Activated CD4-positive, alpha-beta memory T cell treated with anti-CD3 and anti-CD28 coated beads for 36 hours (primary cell): ENCODE measurements at regions of chr11 and their contacts with region 1.

Region 1: GRCh38 chr11:114262681-114263512 is 33.3 kb upstream of the NNMT start:
- DNase-seq: peak; percentile 20
- H3K4me3 Mint-ChIP-seq: no peak overlapping the region
- H3K27ac Mint-ChIP-seq: no peak overlapping the region
- H3K4me1 Mint-ChIP-seq: no peaks in the 10 kb centered on the region
- H3K27me3 Mint-ChIP-seq: no peaks in the 10 kb centered on the region

Region 2: DNA sequence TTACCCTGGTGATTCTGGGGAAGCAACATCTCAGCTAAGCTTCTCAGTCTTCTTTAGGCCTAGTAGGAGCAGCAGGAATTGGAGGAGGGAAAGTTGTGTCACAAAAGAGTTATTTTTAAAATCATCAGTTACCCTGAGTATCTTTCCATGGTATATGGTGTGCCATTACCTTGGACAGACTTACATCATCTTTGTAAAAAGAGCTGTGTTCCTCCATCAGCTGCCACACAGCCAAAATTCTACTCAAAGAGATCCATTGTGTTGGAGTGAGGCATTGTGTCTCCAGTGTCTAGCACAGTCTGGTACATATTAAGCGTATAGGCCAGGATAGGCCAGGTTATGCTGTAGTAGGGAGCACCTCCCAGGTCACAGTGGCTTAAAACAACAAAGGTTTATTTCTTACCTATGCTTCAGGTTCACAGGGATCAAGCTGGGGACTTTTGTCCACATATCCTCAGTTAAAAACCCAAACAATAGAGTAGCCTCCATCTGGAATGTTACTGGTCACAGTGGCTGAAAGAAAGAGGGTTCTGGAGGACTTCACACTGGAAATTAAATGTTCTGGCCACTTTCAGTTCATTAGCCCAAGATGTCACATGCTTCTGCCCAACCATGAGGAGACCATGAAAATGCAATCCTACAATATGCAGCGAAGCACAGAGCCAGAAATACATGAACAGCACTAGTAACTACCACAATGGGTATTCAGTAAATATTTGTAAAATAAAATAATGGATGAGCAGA is 546.8 kb before region 1 on chr11:
- CTCF ChIA-PET with region 1: no interaction called
- POLR2A ChIA-PET with region 1: no interaction called
- intact Hi-C with region 1: no loop called
- DNase-seq: no peak
- H3K4me3 Mint-ChIP-seq: no peak overlapping the region
- H3K27ac Mint-ChIP-seq: no peak overlapping the region
- H3K4me1 Mint-ChIP-seq: no peaks in the 10 kb centered on the region
- H3K27me3 Mint-ChIP-seq: no peaks in the 10 kb centered on the region

Region 3: DNA sequence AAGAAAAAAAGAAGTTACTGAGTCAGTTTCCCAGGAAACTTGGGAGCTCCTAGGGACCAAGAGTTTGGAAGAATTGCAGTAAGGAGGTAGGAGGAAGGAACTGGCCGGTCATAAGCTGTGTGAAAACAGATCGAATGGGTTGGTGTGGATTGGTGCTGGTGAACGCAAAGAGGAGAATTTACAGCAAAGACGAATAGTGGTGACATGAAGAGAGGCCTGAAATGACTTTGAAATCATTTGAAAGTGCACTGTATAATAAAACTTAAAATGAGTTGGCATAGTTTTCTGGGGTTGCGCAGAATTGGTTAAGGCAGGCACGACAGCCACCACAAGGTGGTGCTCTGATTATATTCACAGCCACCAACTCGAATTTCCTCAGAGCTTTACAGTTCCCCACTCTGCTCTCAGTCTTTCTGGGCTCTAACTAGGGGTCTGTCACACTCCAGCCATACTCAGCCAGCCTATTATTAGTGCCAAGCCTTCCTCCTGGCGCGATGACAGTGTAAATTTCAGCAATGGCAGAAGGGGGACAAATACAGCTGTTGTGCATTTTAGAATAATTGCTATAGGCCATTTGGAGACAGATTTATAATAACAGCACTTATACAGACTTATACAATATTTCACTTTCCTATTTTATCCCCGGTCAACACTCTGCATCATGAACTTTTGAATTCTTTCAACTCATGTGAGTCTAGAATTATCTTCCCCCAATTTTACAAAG is 366.6 kb before region 1 on chr11:
- CTCF ChIA-PET with region 1: interaction called, 140 read pairs
- POLR2A ChIA-PET with region 1: interaction called, 4 read pairs
- intact Hi-C with region 1: loop called (anchors 1 kb)
- DNase-seq: peak; percentile 50
- H3K4me3 Mint-ChIP-seq: no peak overlapping the region
- H3K27ac Mint-ChIP-seq: no peak overlapping the region
- H3K4me1 Mint-ChIP-seq: no peaks in the 10 kb centered on the region
- H3K27me3 Mint-ChIP-seq: no peaks in the 10 kb centered on the region

Region 4: GRCh38 chr11:114026355-114026754 is 236.5 kb before region 1 on chr11:
- CTCF ChIA-PET with region 1: interaction called, 24 read pairs
- POLR2A ChIA-PET with region 1: no interaction called
- intact Hi-C with region 1: no loop called
- DNase-seq: peak; percentile 31
- H3K4me3 Mint-ChIP-seq: no peak overlapping the region
- H3K27ac Mint-ChIP-seq: no peak overlapping the region
- H3K4me1 Mint-ChIP-seq: no peaks in the 10 kb centered on the region
- H3K27me3 Mint-ChIP-seq: no peaks in the 10 kb centered on the region

Region 5: GRCh38 chr11:114044042-114044871 is 218.6 kb before region 1 on chr11:
- CTCF ChIA-PET with region 1: interaction called, 34 read pairs
- POLR2A ChIA-PET with region 1: no interaction called
- intact Hi-C with region 1: no loop called
- DNase-seq: no peak
- H3K4me3 Mint-ChIP-seq: no peak overlapping the region
- H3K27ac Mint-ChIP-seq: no peak overlapping the region
- H3K4me1 Mint-ChIP-seq: peaks cover 12% of the 10 kb centered on the region
- H3K27me3 Mint-ChIP-seq: no peaks in the 10 kb centered on the region

Region 6: GRCh38 chr11:114059278-114059983 is 203.5 kb before region 1 on chr11 and contains the start of gene ZBTB16:
- CTCF ChIA-PET with region 1: interaction called, 19 read pairs
- POLR2A ChIA-PET with region 1: no interaction called
- intact Hi-C with region 1: loop called (anchors 5 kb)
- DNase-seq: peak; percentile 75
- H3K4me3 Mint-ChIP-seq: peak within 1 kb of the TSS; percentile 80
- H3K27ac Mint-ChIP-seq: peak within 1 kb of the TSS; percentile 67
- H3K4me1 Mint-ChIP-seq: peaks cover 6% of the 10 kb centered on the region
- H3K27me3 Mint-ChIP-seq: peaks cover 16% of the 10 kb centered on the region
- total RNA-seq, gene ZBTB16: 7.7 to 9.7 TPM

Region 7: DNA sequence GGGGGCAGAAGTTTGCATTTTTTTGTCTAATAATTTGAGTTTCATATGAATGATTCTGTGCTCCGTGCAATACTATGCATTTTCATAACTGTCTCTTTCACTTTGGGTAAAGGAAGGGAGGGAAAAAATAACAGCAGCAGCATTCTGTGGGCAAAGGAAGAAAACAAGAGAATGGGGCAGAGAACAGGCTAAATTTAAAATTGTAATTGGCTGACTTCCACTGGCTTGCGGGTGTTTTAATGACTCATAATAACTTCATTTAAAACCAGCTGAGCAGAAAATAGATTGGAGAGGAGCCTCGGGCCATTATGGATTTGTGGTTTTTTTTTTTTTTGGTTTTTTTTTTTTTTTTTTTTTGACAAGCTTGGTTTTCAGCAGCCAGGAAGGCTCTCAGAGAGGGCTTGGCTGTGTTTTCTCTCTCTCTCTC is 96.0 kb before region 1 on chr11:
- CTCF ChIA-PET with region 1: interaction called, 10 read pairs
- POLR2A ChIA-PET with region 1: no interaction called
- intact Hi-C with region 1: no loop called
- DNase-seq: no peak
- H3K4me3 Mint-ChIP-seq: peak overlapping the region; percentile 49
- H3K27ac Mint-ChIP-seq: peak overlapping the region; percentile 58
- H3K4me1 Mint-ChIP-seq: peaks cover 77% of the 10 kb centered on the region
- H3K27me3 Mint-ChIP-seq: peaks cover 2% of the 10 kb centered on the region

Region 8: DNA sequence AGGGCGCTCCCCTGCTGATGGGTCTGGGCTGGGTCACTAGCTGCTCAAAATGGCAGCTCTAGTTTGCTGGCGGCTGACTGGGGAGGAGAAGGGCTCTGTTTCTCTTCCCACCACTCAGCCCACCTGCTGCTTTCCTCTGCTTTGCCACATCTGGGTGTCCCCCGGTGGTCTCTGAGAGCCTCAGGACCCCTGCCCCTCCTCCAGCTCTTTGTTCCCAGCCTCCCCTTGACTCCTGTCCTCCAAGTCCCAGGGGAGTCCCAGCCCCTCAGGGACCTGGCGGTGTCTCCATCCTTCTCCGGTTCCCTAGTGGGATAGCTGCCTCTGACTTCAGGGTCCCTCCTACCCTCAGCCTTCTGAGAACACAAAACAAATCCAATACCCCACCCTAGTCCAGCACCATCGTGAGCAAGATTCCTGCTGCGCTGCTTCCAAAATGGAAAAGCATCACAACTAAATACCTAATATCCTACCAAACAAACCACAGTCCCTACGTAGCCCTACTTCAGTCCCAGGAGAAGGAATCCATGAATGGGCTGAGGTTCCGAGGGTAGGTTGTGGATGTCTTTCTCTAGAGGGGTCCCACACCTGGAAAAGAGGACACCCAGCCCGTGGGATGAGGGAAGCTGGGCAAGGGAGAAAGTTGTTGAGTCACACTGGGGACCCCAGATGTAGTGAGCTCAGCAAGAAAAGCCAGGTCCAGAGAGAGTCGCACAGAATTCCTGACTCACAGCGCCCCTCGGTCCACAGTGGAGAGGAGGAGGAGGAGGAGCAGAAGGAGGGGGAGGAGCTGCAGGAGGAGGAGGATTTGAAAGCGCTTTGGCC is 11.7 kb before region 1 on chr11:
- CTCF ChIA-PET with region 1: interaction called, 66 read pairs
- POLR2A ChIA-PET with region 1: no interaction called
- intact Hi-C with region 1: no loop called
- DNase-seq: no peak
- H3K4me3 Mint-ChIP-seq: no peak overlapping the region
- H3K27ac Mint-ChIP-seq: no peak overlapping the region
- H3K4me1 Mint-ChIP-seq: no peaks in the 10 kb centered on the region
- H3K27me3 Mint-ChIP-seq: no peaks in the 10 kb centered on the region

Region 9: GRCh38 chr11:114358716-114359115 is 95.8 kb after region 1 on chr11:
- CTCF ChIA-PET with region 1: no interaction called
- POLR2A ChIA-PET with region 1: no interaction called
- intact Hi-C with region 1: no loop called
- DNase-seq: no peak
- H3K4me3 Mint-ChIP-seq: no peak overlapping the region
- H3K27ac Mint-ChIP-seq: no peak overlapping the region
- H3K4me1 Mint-ChIP-seq: no peaks in the 10 kb centered on the region
- H3K27me3 Mint-ChIP-seq: peaks cover 2% of the 10 kb centered on the region